T-cell (primary cell): ENCODE measurements at regions of chr14 and their contacts with region 1.

Region 1: DNA sequence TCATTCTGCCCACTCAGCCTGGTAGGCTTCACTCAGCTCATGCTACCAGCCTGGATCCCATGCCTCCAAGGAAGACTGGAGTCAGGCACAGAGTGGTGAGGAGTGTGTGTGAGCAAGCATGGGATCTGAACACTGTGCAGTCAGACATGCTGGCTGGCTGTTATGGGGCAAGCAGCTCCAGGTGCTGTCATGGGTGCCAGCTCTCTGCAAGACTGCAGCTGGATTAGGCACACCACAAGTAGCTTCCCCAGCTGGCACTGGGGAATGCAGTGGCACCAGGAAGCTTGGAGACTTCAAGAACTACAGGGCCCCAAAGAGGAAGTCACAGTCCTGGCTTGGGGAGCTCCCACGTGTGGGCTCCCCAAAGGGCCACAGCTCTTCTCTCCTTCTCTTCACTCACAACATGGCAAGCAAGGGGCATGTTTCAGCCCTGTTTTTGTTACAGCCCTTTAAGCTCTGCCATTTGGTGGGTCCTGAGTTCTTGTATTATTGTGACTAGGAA is 202.5 kb downstream of the VRK1 start:
- DNase-seq: no peak
- ATAC-seq: no peak
- H3K4me3 ChIP-seq: no peak overlapping the region
- H3K4me3 Mint-ChIP-seq: no peak overlapping the region
- H3K27ac ChIP-seq: no peak overlapping the region
- H3K27ac Mint-ChIP-seq: no peak overlapping the region
- H3K4me1 ChIP-seq: no peaks in the 10 kb centered on the region
- H3K4me1 Mint-ChIP-seq: peaks cover under 1 to 2% (median 2%) of the 10 kb centered on the region in 3 donors
- H3K27me3 ChIP-seq: peaks cover 0 to 10% of the 10 kb centered on the region in 2 experiments
- H3K27me3 Mint-ChIP-seq: peaks cover 0 to 3% of the 10 kb centered on the region in 2 donors

Region 2: DNA sequence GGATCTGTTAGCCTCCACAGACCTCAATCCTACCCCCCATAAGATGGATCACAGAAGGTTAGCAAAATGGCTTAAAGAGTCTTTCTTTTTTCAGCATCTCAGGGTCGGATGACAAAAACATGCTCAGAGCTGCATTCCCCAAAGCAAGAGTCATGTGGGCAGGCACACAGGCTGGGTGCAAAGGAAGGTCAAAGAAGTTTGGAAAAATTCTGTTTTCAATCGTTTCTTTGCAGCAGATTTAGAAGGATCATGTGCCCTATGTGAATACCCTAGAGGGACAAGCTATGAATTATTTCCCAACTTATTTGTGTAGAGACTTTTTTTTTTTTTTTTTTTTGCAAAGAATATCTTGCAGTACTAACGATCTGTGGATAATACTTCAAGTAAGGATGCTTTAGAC is 642.9 kb after region 1 on chr14:
- CTCF ChIA-PET with region 1: no interaction called
- POLR2A ChIA-PET with region 1: interaction called in 1 of 2 experiments, 10 read pairs
- DNase-seq: no peak
- ATAC-seq: no peak
- H3K4me3 ChIP-seq: no peak overlapping the region
- H3K4me3 Mint-ChIP-seq: peak overlapping the region in 1 of 3 donors; percentile 60
- H3K27ac ChIP-seq: no peak overlapping the region
- H3K27ac Mint-ChIP-seq: peak overlapping the region; percentile 66 to 88
- H3K4me1 ChIP-seq: peaks cover 3 to 7% of the 10 kb centered on the region in 2 experiments
- H3K4me1 Mint-ChIP-seq: peaks cover 45 to 50% (median 49%) of the 10 kb centered on the region in 3 donors
- H3K27me3 ChIP-seq: no peaks in the 10 kb centered on the region
- H3K27me3 Mint-ChIP-seq: no peaks in the 10 kb centered on the region